A673 (cell line): ENCODE measurements at regions of chr9 and their contacts with region 1.

Region 1: GRCh38 chr9:694403-695154 is 146.9 kb upstream of the DMRT1 start:
- DNase-seq: no peak
- H3K4me3 ChIP-seq: no peak overlapping the region
- H3K27ac ChIP-seq: peak overlapping the region; percentile 83
- H3K4me1 ChIP-seq: peaks cover 9% of the 10 kb centered on the region
- H3K27me3 ChIP-seq: no peaks in the 10 kb centered on the region
- CTCF ChIP-seq: no peak

Region 2: GRCh38 chr9:445033-445432 is 249.5 kb before region 1 on chr9:
- CTCF ChIA-PET with region 1: interaction called, 11 read pairs
- POLR2A ChIA-PET with region 1: no interaction called
- intact Hi-C with region 1: no loop called
- DNase-seq: peak; percentile 10
- H3K4me3 ChIP-seq: no peak overlapping the region
- H3K27ac ChIP-seq: no peak overlapping the region
- H3K4me1 ChIP-seq: no peaks in the 10 kb centered on the region
- H3K27me3 ChIP-seq: peaks cover 7% of the 10 kb centered on the region
- CTCF ChIP-seq: no peak

Region 3: DNA sequence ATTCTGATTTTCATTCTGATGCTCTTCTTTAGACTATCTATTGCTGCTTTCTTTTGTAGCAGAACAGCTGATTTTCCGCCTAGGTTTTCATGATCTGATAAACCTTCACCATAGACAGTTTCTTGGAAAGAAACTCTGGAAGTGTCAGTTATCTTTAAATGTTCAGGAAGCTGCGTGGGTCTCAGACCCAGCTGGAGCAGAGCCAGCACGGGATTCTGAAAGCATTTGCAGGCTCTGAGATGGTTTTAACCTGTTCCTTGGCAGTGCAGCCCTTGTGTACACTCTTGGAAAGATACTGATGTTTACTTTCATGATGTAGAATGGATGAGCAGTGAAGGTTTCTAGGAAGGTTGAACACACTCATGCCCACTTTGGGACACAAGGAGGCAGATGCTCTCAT is 31.0 kb before region 1 on chr9:
- CTCF ChIA-PET with region 1: no interaction called
- POLR2A ChIA-PET with region 1: interaction called, 16 read pairs
- intact Hi-C with region 1: no loop called
- DNase-seq: no peak
- H3K4me3 ChIP-seq: no peak overlapping the region
- H3K27ac ChIP-seq: no peak overlapping the region
- H3K4me1 ChIP-seq: no peaks in the 10 kb centered on the region
- H3K27me3 ChIP-seq: no peaks in the 10 kb centered on the region
- CTCF ChIP-seq: no peak